ENCODE measurements at regions of chr11 and their contacts with region 1.

Region 1: DNA sequence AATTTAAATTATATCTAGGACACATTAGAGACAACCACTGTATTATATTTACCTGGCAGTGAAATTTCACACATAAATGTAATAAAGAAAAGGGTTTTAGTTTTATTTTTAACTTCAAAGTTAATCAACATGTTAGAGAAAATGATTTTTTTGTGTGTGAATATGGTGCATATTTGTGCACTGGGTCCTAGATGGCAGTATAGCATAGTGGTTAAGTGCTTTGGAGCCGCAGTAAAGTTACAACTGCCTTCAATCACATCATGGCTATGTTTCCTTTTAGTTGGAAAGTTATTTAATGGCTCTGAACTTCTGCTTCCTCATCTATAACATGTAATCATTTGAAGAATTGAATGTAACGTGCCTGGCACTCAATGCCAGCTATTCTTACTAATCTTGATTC is 108.9 kb upstream of the DDI1 start:
- DNase-seq: peak; percentile 30
- H3K4me3 ChIP-seq: no peak overlapping the region
- H3K27ac ChIP-seq: no peak overlapping the region
- H3K4me1 ChIP-seq: no peaks in the 10 kb centered on the region
- H3K27me3 ChIP-seq: no peaks in the 10 kb centered on the region
- CTCF ChIP-seq: peak; percentile 53

Region 2: GRCh38 chr11:104151404-104152204 is 224.1 kb after region 1 on chr11:
- CTCF ChIA-PET with region 1: no interaction called
- POLR2A ChIA-PET with region 1: no interaction called
- intact Hi-C with region 1: loop called (anchors 5 kb)
- DNase-seq: peak; percentile 58
- H3K4me3 ChIP-seq: no peak overlapping the region
- H3K27ac ChIP-seq: no peak overlapping the region
- H3K4me1 ChIP-seq: peaks cover 29% of the 10 kb centered on the region
- H3K27me3 ChIP-seq: no peaks in the 10 kb centered on the region
- CTCF ChIP-seq: peak; percentile 73

Region 3: GRCh38 chr11:104238916-104239315 is 311.4 kb after region 1 on chr11:
- CTCF ChIA-PET with region 1: no interaction called
- POLR2A ChIA-PET with region 1: no interaction called
- intact Hi-C with region 1: loop called (anchors 10 kb)
- DNase-seq: peak; percentile 66
- H3K4me3 ChIP-seq: no peak overlapping the region
- H3K27ac ChIP-seq: peak overlapping the region; percentile 35
- H3K4me1 ChIP-seq: no peaks in the 10 kb centered on the region
- H3K27me3 ChIP-seq: no peaks in the 10 kb centered on the region
- CTCF ChIP-seq: no peak

Measured in A673 (cell line).